ENCODE measurements at regions of chrX and their contacts with region 1.

Region 1: DNA sequence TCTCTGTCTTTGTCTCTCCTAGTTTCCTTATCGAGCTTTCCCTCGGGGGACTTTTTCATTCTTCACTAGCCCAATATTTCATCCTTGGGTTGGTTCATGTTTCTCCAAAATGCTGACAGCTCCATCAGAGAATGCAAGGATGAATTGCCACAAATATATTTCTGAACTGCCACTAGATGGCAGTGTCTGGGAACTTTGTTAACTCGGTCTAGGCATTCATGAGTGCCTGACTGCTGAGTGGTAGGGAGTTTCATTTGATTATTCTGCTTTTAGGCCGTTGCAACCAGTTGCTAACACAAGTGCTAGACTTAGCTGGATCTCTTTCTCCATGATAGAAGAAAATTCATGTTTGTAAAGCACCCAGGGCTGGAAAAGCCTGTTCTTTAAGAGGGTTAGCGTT is 73.5 kb upstream of the RAP2C start:
- DNase-seq: peak; percentile 33
- H3K4me3 Mint-ChIP-seq: no peak overlapping the region
- H3K27ac Mint-ChIP-seq: no peak overlapping the region
- H3K4me1 Mint-ChIP-seq: peaks cover 3% of the 10 kb centered on the region
- H3K27me3 Mint-ChIP-seq: no peaks in the 10 kb centered on the region

Region 2: GRCh38 chrX:132092439-132093065 is 200.2 kb before region 1 on chrX:
- CTCF ChIA-PET with region 1: interaction called, 3 read pairs
- intact Hi-C with region 1: loop called (anchors 2 kb)
- DNase-seq: peak; percentile 77
- H3K4me3 Mint-ChIP-seq: no peak overlapping the region
- H3K27ac Mint-ChIP-seq: no peak overlapping the region
- H3K4me1 Mint-ChIP-seq: no peaks in the 10 kb centered on the region
- H3K27me3 Mint-ChIP-seq: no peaks in the 10 kb centered on the region

Region 3: DNA sequence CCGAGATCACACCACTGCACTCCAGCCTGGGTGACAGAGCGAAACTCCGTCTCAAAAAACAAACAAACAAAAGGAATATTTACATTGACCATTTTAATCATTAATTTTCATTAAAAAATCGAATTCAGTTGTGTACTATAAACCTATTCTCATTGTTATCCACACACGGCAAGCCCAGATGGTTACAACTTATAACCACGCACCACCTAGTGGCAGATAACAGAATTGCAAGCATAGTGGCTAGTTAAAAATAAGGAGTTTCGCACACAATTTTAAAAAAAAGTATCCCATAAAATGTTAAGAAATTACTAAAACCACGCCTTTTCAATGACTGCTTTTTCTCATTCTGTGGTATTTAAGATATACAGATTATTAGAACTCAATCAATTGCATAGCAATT is 170.6 kb after region 1 on chrX:
- CTCF ChIA-PET with region 1: interaction called, 3 read pairs
- intact Hi-C with region 1: loop called (anchors 1 kb)
- DNase-seq: peak; percentile 42
- H3K4me3 Mint-ChIP-seq: no peak overlapping the region
- H3K27ac Mint-ChIP-seq: no peak overlapping the region
- H3K4me1 Mint-ChIP-seq: no peaks in the 10 kb centered on the region
- H3K27me3 Mint-ChIP-seq: no peaks in the 10 kb centered on the region

Region 4: DNA sequence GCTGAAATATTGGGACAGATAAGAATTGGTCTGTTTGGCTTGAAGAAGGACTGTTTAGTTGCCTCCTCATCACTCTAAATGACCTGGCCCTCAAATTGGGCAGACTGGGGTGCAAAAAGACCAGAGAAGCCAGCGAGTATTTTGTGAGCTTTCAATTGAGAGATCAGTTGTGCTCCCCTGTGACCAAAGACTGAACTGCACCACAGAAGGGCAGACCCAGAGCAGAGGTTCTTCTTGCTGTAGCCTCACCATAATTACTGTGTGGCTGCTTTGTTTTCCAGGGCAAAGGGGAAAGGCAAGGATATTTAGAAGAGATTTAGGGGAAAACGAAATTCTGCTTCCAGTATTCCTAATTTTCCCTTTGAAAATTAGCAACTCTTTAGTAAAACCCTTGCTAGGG is 300.1 kb after region 1 on chrX:
- CTCF ChIA-PET with region 1: no interaction called
- intact Hi-C with region 1: loop called (anchors 1 kb)
- DNase-seq: peak; percentile 13
- H3K4me3 Mint-ChIP-seq: no peak overlapping the region
- H3K27ac Mint-ChIP-seq: no peak overlapping the region
- H3K4me1 Mint-ChIP-seq: no peaks in the 10 kb centered on the region
- H3K27me3 Mint-ChIP-seq: no peaks in the 10 kb centered on the region

Region 5: DNA sequence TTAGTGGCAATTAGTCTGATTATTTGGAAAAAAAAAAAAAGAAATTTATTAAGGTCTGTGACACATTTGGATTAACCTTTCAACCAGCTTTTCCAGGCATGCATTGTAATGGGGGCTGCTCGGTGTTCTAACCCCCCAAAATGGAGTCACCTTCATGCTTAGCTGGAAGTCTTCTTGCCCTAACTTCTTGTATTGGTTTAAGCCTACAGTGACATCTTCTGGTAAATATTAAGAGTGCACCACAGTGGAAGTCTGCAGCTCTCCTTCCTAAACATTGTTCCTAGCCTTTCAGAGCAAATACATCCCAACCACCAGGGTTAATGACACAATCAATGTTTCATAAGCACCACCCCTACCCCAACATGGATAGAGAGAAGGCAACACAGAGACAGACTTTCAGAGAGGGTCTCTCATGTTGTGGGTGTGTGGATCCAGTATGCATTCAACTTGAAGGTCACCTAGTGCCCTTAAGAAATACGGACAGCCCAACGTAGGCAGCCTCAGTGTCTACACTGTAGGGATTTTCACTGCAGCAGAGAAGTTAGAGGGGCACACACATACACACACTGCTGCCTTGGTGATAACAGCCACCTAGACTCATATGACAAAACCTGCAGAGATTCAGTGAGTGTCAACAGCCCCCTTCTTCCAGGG is 338.9 kb after region 1 on chrX:
- CTCF ChIA-PET with region 1: interaction called, 10 read pairs
- intact Hi-C with region 1: loop called (anchors 5 kb)
- DNase-seq: no peak
- H3K4me3 Mint-ChIP-seq: no peak overlapping the region
- H3K27ac Mint-ChIP-seq: no peak overlapping the region
- H3K4me1 Mint-ChIP-seq: no peaks in the 10 kb centered on the region
- H3K27me3 Mint-ChIP-seq: no peaks in the 10 kb centered on the region